ENCODE measurements at regions of chr1 and their contacts with region 1.

Region 1: DNA sequence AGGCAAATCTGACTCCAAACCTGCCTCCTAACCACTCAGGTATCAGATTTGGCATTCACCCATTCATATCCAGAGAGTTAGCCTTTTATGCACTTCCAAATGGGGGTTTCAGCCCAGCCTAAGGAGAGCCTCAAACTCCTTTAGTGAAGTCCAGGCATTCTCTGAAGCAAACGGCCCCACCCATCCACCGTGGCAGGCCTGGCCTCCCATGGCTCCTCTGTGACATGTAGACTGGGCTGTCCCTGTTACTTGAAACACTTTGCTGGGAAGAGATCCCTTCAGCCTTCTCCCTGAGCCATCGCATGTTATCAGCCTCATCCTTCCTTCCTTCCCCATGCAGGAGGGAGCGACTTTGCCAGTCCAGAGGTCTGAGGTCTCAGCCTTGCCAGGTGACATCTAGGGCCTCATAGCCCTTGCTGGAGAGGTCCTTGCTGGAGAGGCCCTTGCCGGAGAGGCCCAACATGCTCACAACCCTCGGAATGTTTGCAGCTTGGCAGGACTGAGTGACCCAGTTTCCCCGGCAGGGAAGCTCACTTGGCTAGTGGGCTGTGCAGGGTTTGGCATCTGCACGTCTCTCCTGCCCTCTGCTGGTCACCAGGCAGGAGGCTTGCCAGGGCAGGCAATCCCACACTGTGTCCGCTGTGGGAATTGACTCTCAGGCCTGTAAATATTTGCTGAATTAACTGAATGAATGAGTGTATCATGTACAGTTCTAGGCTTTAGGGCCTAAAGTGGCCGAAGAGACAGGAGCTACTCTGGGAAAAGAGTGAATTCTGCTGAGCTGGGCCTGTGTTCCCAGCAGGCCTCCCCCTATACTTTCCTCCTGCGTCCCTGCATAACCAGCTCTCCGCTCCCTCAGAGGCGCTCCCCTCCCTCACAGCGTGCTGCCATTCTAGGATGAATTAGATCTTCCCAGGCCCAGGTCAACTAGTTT is 26.7 kb upstream of the RBM15 start:
- DNase-seq: peak; percentile 67 to 74
- H3K4me3 ChIP-seq: no peak overlapping the region
- H3K4me3 Mint-ChIP-seq: no peak overlapping the region
- H3K27ac Mint-ChIP-seq: no peak overlapping the region
- H3K4me1 ChIP-seq: no peaks in the 10 kb centered on the region
- H3K4me1 Mint-ChIP-seq: no peaks in the 10 kb centered on the region
- H3K27me3 ChIP-seq: no peaks in the 10 kb centered on the region
- H3K27me3 Mint-ChIP-seq: no peaks in the 10 kb centered on the region
- CTCF ChIP-seq: peak; percentile 68 to 87

Region 2: DNA sequence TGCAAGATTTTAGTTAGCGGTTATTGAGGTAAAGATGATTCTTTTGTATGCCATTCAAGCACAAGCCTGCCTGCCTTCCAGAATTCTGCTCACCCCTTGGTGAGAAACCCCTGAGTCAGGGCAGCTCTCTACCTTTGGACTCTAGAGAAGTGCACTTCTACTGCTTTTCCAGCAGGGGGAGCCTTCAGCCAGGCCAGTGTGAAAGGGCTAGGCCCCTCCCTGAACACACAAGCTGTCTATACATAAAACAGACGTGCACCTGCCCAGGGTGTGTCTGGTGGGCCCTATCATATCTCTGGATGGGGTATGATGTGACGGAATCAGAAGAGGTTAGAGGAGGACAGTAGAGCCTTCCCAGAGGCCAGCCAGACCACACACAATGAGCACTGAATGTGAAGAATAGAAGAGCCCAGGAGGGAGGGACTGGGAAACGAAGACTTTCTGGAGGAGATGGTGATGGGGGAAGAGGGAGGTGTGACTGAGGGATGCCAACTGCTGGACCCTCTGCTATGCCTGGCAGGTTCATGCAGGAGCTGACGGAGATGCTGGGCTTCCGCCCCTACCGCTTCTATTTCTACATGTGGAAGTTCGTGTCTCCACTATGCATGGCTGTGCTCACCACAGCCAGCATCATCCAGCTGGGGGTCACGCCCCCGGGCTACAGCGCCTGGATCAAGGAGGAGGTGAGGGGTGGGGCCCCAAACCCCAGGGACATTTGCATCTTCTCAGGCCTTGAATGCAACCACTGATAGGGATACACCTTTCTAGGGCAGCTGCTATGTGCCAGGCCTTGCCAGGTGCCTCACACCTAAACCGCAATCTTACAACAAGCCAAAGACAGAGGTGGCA is 115.3 kb before region 1 on chr1:
- CTCF ChIA-PET with region 1: interaction called, 14 read pairs
- POLR2A ChIA-PET with region 1: no interaction called
- intact Hi-C with region 1: no loop called
- DNase-seq: peak; percentile 56 to 57
- H3K4me3 ChIP-seq: no peak overlapping the region
- H3K4me3 Mint-ChIP-seq: no peak overlapping the region
- H3K27ac Mint-ChIP-seq: no peak overlapping the region
- H3K4me1 ChIP-seq: no peaks in the 10 kb centered on the region
- H3K4me1 Mint-ChIP-seq: no peaks in the 10 kb centered on the region
- H3K27me3 ChIP-seq: no peaks in the 10 kb centered on the region
- H3K27me3 Mint-ChIP-seq: no peaks in the 10 kb centered on the region
- CTCF ChIP-seq: peak; percentile 68 to 76

Region 3: GRCh38 chr1:110203021-110203661 is 109.3 kb before region 1 on chr1:
- CTCF ChIA-PET with region 1: interaction called, 89 read pairs
- POLR2A ChIA-PET with region 1: no interaction called
- intact Hi-C with region 1: loop called (anchors 1 kb)
- DNase-seq: peak; percentile 43 to 66
- H3K4me3 ChIP-seq: no peak overlapping the region
- H3K4me3 Mint-ChIP-seq: no peak overlapping the region
- H3K27ac Mint-ChIP-seq: no peak overlapping the region
- H3K4me1 ChIP-seq: no peaks in the 10 kb centered on the region
- H3K4me1 Mint-ChIP-seq: no peaks in the 10 kb centered on the region
- H3K27me3 ChIP-seq: no peaks in the 10 kb centered on the region
- H3K27me3 Mint-ChIP-seq: no peaks in the 10 kb centered on the region
- CTCF ChIP-seq: peak; percentile 53 to 59

Region 4: DNA sequence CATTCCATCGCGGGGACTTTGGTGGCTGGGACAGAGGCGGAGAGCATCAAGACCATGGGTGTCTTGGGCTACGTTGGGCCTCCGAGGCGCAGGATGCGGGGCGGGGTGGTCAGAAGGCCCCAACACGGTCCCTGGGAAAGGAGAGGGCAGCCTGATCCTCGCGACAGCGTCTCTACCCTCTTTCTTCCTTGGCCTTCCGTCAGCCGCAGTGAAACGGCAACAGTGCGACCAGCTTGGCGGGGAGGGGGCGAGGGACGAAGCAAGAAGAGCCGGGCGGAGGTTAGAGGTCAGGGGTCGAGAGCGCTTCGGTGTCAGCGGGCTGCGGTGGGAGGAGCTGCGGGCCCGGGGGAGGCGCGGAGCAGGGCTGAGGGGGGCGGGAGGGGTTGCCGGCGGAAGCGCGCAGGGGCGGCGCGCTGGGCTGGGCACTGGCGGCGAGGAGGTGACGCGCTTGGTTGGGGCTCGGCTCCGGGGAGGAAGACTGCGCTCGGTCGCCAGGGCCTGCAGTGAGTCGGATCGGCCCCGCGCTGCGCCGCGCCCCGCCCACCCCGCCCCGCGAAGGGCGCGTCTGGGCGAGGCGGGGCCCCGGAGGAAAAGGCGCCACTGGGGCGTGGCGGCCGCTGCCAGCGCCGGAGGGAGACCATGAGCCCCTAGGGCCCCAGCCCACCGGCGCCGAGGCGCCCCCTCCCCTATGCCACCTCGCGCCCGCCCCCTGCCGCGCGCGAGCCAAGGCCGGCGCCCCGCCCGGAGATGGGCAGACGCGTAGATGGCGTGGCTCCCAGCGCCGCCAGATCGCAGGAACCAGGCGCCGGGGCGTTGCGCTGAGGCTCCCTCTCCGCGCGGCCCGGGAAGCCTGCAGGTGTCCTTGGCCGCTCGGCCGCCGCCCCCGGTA is 102.5 kb before region 1 on chr1 and contains the start of gene KCNC4:
- CTCF ChIA-PET with region 1: interaction called, 89 read pairs
- POLR2A ChIA-PET with region 1: no interaction called
- intact Hi-C with region 1: loop called (anchors 1 kb)
- DNase-seq: peak; percentile 74
- H3K4me3 ChIP-seq: peak within 1 kb of the TSS; percentile 51
- H3K4me3 Mint-ChIP-seq: peak within 1 kb of the TSS; percentile 85
- H3K27ac Mint-ChIP-seq: no peak within 1 kb of the TSS
- H3K4me1 ChIP-seq: peaks cover 4% of the 10 kb centered on the region; the same call in 1 of the 2 replicates
- H3K4me1 Mint-ChIP-seq: no peaks in the 10 kb centered on the region
- H3K27me3 ChIP-seq: no peaks in the 10 kb centered on the region
- H3K27me3 Mint-ChIP-seq: no peaks in the 10 kb centered on the region
- CTCF ChIP-seq: no peak
- total RNA-seq, gene KCNC4: 5.3 TPM in 2 replicates

Region 5: GRCh38 chr1:110254996-110255787 is 57.3 kb before region 1 on chr1:
- CTCF ChIA-PET with region 1: interaction called, 7 read pairs
- POLR2A ChIA-PET with region 1: no interaction called
- intact Hi-C with region 1: loop called (anchors 1 kb)
- DNase-seq: no peak
- H3K4me3 ChIP-seq: no peak overlapping the region
- H3K4me3 Mint-ChIP-seq: no peak overlapping the region
- H3K27ac Mint-ChIP-seq: no peak overlapping the region
- H3K4me1 ChIP-seq: no peaks in the 10 kb centered on the region
- H3K4me1 Mint-ChIP-seq: no peaks in the 10 kb centered on the region
- H3K27me3 ChIP-seq: no peaks in the 10 kb centered on the region
- H3K27me3 Mint-ChIP-seq: peaks cover 3% of the 10 kb centered on the region
- CTCF ChIP-seq: no peak

Region 6: DNA sequence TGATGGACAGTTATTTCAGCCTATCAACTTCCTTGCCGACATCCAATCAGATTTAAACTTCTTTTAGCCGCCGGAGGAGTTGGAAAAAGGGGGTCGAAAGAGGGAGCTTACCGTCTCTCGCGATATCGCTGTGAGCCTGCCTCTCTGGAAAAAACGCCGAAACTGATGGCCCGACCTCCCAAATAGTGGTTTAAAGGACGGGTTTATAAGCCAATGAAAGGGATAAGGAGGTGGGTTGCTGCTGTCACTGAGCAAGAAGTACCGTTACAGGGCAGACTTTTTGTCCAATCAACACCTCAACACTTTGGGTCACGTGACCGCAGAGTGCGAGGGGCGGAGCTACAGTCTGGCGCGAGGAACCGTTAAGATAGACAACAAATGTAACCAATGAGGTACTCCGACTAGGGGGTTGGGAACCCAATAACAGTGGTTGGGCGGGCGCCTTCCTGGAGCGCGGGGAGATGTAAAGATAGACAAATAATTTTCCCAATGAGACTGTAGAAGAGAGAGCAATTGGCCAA is 26.5 kb after region 1 on chr1 and contains the start of gene RBM15:
- CTCF ChIA-PET with region 1: interaction called, 10 read pairs
- POLR2A ChIA-PET with region 1: interaction called, 3 read pairs
- intact Hi-C with region 1: no loop called
- DNase-seq: peak; percentile 95 to 97
- H3K4me3 ChIP-seq: peak within 1 kb of the TSS; percentile 92
- H3K4me3 Mint-ChIP-seq: no peak within 1 kb of the TSS
- H3K27ac Mint-ChIP-seq: no peak within 1 kb of the TSS
- H3K4me1 ChIP-seq: peaks cover 18% of the 10 kb centered on the region; the same call in 1 of the 2 replicates
- H3K4me1 Mint-ChIP-seq: peaks cover 15% of the 10 kb centered on the region
- H3K27me3 ChIP-seq: no peaks in the 10 kb centered on the region
- H3K27me3 Mint-ChIP-seq: no peaks in the 10 kb centered on the region
- CTCF ChIP-seq: no peak
- total RNA-seq, gene RBM15: 34.3 and 36.1 TPM in 2 replicates

Region 7: GRCh38 chr1:110495926-110496600 is 183.6 kb after region 1 on chr1:
- CTCF ChIA-PET with region 1: interaction called, 6 read pairs
- POLR2A ChIA-PET with region 1: no interaction called
- intact Hi-C with region 1: loop called (anchors 2 kb)
- DNase-seq: peak; percentile 64 to 80
- H3K4me3 ChIP-seq: no peak overlapping the region
- H3K4me3 Mint-ChIP-seq: no peak overlapping the region
- H3K27ac Mint-ChIP-seq: no peak overlapping the region
- H3K4me1 ChIP-seq: 0 out of 2 replicates have a peak, but pooled peaks cover 4% of the 10 kb centered on the region
- H3K4me1 Mint-ChIP-seq: no peaks in the 10 kb centered on the region
- H3K27me3 ChIP-seq: no peaks in the 10 kb centered on the region
- H3K27me3 Mint-ChIP-seq: no peaks in the 10 kb centered on the region
- CTCF ChIP-seq: peak; percentile 72 to 74

Measured in Caco-2 (cell line).